ENCODE measurements at regions of chr2 and their contacts with region 1.

Region 1: DNA sequence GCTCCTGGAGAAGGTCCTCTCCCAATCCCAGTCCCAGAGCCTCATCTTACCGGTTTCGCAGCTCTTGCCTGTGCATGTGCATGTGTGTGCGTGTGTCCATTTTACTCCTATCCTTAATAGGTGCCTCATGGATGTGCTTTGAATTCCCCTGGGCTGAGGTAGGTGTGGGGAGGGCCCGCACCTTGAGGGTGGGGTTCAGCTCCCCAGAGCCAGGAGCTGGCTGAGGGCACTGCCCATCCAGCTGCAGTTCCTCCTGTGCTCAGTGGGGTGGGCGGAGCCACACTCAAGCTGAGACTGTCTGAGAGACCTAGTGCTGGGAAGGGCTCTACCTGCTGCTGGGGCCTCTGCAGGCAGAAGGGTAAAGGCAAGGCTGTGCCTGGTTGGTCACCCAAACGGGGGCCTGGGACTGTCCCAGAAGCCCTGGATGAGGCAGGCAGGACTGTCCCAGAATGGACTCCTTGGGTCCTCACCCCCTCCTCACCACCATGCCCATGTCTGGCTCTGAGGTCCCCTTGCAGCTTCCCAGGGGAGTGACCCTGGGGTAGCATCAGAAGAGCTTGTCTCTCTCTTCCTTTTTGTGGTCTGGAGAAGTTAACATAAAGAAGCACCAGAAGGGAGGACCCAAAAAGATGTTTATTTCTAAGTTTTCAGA is 8.9 kb downstream of the GDF7 start:
- DNase-seq: no peak
- H3K4me3 ChIP-seq: no peak overlapping the region
- H3K27ac ChIP-seq: no peak overlapping the region
- H3K27me3 ChIP-seq: peaks cover 20% of the 10 kb centered on the region
- CTCF ChIP-seq: no peak

Region 2: DNA sequence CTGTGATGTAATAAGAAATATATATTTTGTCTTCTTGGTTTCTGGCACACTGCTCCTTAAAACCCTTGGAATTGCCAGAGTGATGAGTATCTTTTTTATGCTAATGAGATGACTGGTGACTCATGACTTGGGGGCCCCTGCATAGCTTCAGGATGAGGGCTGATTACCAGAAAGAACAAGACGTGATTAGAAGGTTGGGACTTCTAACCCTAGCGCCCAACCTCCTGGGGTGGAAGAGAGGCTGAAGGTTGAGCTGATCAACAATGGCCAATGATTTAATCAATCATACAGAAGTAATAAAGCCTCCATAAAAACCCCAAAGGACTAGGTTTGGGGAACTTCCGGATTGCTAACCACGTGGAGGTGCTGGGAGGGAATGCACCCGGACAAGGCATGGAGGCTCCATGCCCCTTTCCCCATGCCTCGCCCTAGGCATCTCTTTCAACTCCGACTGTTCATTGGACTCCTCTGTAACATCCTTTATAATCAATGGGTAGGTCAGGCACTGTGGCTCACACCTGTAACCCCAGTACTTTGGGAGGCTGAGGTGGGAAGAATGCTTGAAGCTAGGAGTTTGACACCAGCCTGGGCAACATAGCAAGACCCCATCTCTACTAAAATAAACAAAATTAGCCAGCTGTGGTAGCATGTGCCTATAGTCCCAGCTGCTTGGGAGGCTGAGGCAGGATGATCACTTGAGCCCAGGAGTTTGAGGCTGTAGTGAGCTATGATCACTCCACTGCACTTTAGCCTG is 113.9 kb before region 1 on chr2:
- CTCF ChIA-PET with region 1: no interaction called
- POLR2A ChIA-PET with region 1: no interaction called
- DNase-seq: no peak
- H3K4me3 ChIP-seq: no peak overlapping the region
- H3K27ac ChIP-seq: no peak overlapping the region
- H3K27me3 ChIP-seq: peaks cover 9% of the 10 kb centered on the region
- CTCF ChIP-seq: no peak

Region 3: DNA sequence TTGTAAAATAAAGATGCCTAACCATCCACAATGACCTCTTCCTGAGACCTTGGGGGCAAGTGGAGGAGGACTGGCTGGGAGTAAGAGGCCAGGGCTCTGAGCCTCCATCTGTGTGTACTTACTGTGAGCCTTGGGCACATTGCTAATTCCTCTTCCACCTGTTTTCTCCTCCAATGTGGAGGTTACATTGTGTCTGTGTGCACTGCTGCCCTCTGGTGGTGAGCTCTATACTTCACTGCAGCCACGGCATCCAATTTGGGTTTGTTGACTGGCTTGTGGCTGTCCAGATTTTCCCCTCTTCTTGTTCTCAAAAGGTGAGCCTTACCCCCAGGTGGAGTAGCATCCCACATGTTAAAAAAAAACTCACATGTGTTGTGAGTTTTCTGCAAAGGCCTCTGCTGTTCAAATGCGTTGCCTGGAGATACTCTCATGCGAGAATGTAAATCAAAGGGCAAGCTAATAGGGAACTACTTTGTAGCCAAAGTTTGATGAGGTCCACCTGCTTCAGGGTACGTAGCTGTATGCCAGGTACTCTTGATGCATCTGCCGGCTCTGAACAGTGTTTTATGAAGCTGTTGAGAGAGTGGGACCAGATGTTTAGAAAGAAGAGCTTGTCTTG is 287.2 kb after region 1 on chr2:
- CTCF ChIA-PET with region 1: interaction called, 27 read pairs
- POLR2A ChIA-PET with region 1: no interaction called
- DNase-seq: peak; percentile 3
- H3K4me3 ChIP-seq: no peak overlapping the region
- H3K27ac ChIP-seq: no peak overlapping the region
- H3K27me3 ChIP-seq: peaks cover 9% of the 10 kb centered on the region
- CTCF ChIP-seq: peak; percentile 89